Right lobe of liver (tissue), 6 donors: ENCODE measurements at regions of chr2 and their contacts with region 1.

Region 1: GRCh38 chr2:165401285-165401852 is 68.1 kb upstream of the CSRNP3 start:
- DNase-seq: no peak
- ATAC-seq: peak; percentile 61 to 84 (median 79)
- H3K4me3 ChIP-seq: no peak overlapping the region
- H3K27ac ChIP-seq: no peak overlapping the region
- H3K4me1 ChIP-seq: no peaks in the 10 kb centered on the region
- H3K27me3 ChIP-seq: no peaks in the 10 kb centered on the region
- CTCF ChIP-seq: peak; percentile 64 to 76 (median 74)
- POLR2A ChIP-seq: no peak

Region 2: GRCh38 chr2:165700531-165700930 is 299.2 kb after region 1 on chr2:
- intact Hi-C with region 1: loop called in 1 of 2 experiments (anchors 10 kb)
- DNase-seq: no peak
- ATAC-seq: no peak
- H3K4me3 ChIP-seq: no peak overlapping the region
- H3K27ac ChIP-seq: no peak overlapping the region
- H3K4me1 ChIP-seq: no peaks in the 10 kb centered on the region
- H3K27me3 ChIP-seq: no peaks in the 10 kb centered on the region
- CTCF ChIP-seq: no peak
- POLR2A ChIP-seq: no peak